AG04449 (cell line): ENCODE measurements at regions of chr6 and their contacts with region 1.

Region 1: DNA sequence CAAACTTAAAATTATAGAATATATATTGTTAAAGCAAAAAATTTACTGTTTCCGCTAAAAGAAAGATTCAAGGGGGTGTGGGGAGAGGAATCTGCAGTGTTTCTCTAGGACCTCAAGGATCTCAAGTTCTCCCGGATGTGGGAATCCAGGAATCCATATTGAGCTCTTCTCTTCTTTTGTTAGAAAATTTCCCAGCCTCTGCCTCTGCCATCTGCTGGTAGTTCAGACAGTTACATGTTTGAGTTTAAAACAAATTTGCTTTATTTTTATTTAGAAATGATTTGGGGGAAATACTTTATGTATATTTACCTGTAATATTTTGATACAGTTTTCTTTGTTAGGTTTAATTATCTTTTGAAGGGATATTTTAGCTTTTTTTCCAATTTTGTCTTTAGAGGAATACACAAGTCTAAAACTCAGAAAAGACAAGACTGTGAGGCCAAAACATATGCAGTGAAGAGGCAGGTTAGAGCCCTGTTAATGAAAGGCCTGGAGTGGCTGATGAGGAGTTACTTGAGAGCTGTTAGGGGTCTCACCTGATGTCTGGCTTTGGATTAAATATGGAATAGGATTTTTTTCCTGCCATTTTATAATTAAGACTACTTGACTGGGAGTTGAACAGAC is 268.8 kb downstream of the ARID1B start:
- DNase-seq: no peak
- H3K4me3 ChIP-seq: no peak overlapping the region
- CTCF ChIP-seq: peak; percentile 28

Region 2: GRCh38 chr6:156916130-156916801 is 129.7 kb before region 1 on chr6:
- CTCF ChIA-PET with region 1: no interaction called
- POLR2A ChIA-PET with region 1: no interaction called
- DNase-seq: no peak
- H3K4me3 ChIP-seq: no peak overlapping the region
- CTCF ChIP-seq: no peak

Region 3: DNA sequence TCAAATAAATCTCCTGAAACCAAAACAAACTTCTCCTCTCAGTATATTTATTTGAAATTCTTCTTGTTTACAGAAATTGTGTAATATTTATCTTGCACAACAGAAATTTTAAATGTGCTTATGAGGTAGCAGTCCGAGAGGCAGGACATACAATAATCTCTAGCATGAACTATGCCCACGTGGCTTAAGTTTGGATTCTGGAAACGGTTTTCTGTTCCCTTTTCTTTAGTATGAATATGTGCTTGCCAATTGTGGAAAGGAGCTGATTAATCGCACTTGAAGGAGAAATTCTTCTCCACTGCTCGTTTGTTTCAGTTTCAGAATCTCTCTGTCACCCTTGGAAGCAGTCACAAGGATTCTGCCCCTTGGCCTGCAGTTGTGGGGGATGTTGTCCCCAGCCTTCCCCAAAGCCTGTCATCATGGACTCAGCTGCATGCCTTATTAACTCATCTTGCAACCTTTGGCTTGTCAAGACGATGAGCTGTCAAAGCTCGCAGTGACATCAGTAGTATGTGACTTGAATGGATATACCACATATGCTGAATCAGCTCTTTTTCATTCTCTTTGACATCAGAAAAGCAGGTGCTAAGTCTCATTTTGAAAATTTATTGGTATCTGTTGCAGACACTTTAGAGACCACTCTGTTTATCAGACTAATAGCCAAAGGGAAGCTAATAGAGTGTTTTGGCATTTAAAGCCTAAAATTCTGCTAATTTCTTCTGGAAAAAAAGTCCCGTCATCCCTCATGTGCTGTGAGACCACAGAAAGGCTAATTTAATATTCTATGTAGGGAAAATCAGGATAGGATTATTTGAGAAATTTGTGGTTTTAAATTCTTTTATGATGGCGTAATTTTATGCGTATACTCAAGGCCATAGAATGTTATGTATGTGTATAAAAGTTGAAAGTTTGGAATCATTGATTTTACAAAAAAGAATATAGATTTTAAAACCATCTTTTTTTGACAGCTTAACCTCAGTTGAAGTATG is 81.9 kb before region 1 on chr6:
- CTCF ChIA-PET with region 1: no interaction called
- POLR2A ChIA-PET with region 1: no interaction called
- DNase-seq: no peak
- H3K4me3 ChIP-seq: peak overlapping the region; percentile 33
- CTCF ChIP-seq: no peak

Region 4: GRCh38 chr6:157034436-157035230 is 11.3 kb before region 1 on chr6:
- CTCF ChIA-PET with region 1: interaction called, 50 read pairs
- POLR2A ChIA-PET with region 1: no interaction called
- DNase-seq: no peak
- H3K4me3 ChIP-seq: no peak overlapping the region
- CTCF ChIP-seq: peak; percentile 53

Region 5: DNA sequence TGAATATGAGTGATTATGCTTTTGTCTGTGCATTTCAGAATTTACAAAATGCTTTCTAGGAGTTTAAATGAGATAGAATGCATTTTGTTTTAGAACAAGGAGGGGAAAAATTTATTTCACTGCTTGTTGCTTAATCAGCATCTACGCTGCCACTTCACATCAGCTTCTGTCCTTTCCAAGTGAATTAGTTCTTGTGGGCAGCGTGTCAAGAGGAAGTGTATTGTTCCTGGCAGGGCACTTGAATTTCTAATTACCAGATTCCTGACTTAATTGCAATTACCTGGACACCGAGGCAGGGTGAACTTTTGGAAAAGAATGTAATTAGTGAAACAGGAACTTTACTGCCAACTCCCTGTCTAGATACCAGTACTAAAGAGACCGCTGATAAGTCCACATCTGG is 13.8 kb after region 1 on chr6:
- CTCF ChIA-PET with region 1: interaction called, 49 read pairs
- POLR2A ChIA-PET with region 1: no interaction called
- DNase-seq: no peak
- H3K4me3 ChIP-seq: no peak overlapping the region
- CTCF ChIP-seq: no peak

Region 6: GRCh38 chr6:157068691-157069324 is 22.9 kb after region 1 on chr6:
- CTCF ChIA-PET with region 1: interaction called, 13 read pairs
- POLR2A ChIA-PET with region 1: no interaction called
- DNase-seq: no peak
- H3K4me3 ChIP-seq: no peak overlapping the region
- CTCF ChIP-seq: no peak

Region 7: DNA sequence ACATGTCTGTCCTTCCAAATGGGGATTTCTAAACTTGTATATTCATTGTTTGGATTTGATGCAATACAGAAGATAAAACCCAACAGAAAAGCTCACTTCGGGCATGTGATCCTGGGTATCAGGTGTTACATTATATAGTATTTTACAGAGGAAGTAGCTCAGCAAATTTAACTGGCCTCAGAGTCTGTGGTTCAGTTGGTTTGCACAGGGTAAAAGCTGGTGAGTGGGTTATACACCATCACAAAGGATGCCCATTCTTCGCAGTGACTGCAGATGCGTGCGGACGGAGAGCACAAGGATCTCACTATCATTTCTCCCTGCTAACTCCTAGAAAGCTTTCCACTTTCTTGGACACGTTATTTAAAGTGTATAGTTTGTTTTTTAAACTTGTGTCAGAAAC is 40.7 kb after region 1 on chr6:
- CTCF ChIA-PET with region 1: interaction called, 10 read pairs
- POLR2A ChIA-PET with region 1: no interaction called
- DNase-seq: no peak
- H3K4me3 ChIP-seq: no peak overlapping the region
- CTCF ChIP-seq: no peak

Region 8: DNA sequence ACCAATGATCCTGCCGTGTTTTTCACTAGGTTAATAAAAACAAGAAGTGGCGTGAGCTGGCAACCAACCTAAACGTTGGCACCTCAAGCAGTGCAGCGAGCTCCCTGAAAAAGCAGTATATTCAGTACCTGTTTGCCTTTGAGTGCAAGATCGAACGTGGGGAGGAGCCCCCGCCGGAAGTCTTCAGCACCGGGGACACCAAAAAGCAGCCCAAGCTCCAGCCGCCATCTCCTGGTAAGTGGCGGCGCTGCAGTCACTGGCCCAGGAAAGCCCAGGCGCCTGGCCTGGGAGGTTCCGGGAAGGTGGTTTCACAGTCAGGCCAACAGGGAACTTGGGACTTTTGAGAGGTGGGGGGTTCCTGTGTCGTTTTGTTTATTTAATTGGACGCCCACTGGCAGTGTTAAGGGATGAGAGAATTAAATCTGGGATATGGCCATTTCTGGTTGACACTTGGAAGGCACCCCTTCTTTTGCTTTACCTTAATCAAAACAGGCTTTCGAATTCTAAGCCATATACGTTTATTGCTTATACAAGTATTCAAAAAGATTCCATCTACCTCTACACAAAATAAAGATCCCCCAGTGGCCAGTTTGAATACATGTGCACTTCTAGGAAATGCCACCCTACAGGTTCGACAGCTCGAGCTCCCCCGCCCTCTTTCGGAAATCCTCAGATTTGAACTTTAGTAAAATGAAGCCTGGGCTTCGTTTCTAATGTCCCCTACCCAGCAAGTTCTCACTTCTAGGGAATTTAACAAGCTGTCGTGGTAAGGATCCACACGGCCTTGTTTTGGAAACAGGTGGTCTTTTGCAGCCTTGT is 138.5 kb after region 1 on chr6:
- CTCF ChIA-PET with region 1: interaction called, 15 read pairs
- POLR2A ChIA-PET with region 1: no interaction called
- DNase-seq: no peak
- H3K4me3 ChIP-seq: no peak overlapping the region
- CTCF ChIP-seq: peak; percentile 95